ENCODE measurements at regions of chr7 and their contacts with region 1.

Region 1: DNA sequence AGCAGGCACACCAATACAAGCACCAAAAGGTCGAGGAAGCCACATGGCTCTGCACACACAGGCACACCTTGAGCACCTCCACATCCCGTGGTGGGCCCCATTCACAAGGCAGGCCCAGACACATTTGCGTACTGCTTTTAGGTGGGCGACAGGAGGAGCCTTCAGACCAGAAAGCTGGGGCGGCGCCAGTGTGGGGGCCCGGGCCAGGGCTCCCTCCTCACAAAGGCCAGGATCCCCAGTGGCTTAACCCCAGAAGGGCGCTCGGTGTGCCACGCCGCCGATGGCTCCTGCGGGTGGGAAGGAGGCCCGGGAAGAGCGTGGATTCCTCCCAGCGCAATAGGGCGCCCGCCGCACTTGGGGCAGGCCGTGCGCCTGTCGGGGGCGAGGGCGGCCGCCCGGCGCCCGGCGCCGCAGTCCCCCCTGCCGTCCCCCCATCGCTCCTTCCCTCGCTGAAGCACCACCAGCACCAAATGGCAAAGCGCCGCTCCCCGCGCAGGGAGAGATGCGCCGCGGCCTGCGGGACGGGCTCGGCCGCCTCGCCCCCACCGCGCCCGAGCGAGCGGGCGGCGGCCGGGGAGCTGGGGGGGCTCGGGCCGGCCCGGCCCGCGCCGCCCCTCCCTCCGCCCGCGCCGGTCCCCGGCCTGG is 3.0 kb upstream of the SMARCD3 start:
- DNase-seq: no peak
- H3K4me3 ChIP-seq: peak overlapping the region; percentile 69
- CTCF ChIP-seq: no peak

Region 2: DNA sequence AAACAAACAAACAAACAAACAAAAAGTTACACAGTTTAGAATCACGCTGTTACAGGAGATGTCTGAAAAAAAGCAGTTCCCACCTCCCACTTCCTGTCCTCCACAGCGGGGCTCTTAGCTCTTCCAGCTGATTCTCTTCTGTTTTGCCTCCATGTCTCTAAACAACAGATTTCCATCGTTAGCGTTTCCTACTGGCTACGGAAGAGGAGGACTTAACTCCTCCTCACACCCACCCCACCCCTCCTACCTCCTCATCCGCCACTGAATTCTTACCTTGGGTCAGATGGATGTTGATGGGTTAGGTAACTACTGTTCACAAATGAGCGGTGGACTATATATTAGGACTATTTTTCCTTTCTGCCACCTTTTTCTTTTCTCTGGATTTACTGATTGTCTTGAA is 53.4 kb after region 1 on chr7:
- CTCF ChIA-PET with region 1: interaction called, 11 read pairs
- POLR2A ChIA-PET with region 1: interaction called, 4 read pairs
- DNase-seq: no peak
- H3K4me3 ChIP-seq: peak overlapping the region; percentile 29; the same call in 1 of the 2 replicates
- CTCF ChIP-seq: no peak

Measured in AG04449 (cell line).